ENCODE measurements at regions of chr1 and their contacts with region 1.

Region 1: DNA sequence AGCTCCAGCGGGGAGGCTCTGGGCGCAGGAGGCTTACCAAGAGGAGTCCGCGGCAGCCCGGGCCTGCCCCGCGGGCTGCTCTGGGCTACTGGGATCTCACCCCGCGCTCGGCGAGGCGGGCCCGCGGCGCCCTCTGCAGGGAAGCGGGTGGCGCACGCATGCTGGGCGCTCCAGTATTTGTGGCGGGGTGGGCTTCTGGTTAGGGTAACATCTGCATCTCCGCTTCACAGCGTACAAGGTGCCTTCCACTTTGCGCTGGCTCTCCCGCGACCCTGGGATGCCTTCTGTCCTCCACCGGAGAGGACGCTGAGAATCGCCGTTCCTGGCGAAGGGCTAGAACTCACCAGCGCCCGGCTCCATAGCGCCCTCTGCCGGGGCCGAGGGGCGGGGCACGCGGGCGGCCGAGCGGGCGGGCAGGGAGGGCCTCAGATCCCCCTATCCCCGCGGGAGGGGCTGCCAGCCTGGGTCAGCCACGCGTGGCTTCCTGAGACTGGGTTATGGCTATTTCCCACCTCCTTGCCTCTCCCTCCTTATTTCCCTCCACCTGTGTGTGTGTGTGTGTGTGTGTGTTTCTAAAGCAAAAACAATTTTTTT is 46.6 kb upstream of the CTBS start:
- DNase-seq: no peak
- H3K4me3 ChIP-seq: peak overlapping the region; percentile 66
- H3K27ac ChIP-seq: peak overlapping the region; percentile 77
- H3K27me3 ChIP-seq: no peaks in the 10 kb centered on the region
- CTCF ChIP-seq: peak; percentile 69

Region 2: GRCh38 chr1:84442256-84442655 is 178.6 kb before region 1 on chr1:
- CTCF ChIA-PET with region 1: interaction called, 11 read pairs
- POLR2A ChIA-PET with region 1: no interaction called
- DNase-seq: peak; percentile 78
- H3K4me3 ChIP-seq: no peak overlapping the region
- H3K27ac ChIP-seq: no peak overlapping the region
- H3K27me3 ChIP-seq: no peaks in the 10 kb centered on the region
- CTCF ChIP-seq: peak; percentile 57

Region 3: DNA sequence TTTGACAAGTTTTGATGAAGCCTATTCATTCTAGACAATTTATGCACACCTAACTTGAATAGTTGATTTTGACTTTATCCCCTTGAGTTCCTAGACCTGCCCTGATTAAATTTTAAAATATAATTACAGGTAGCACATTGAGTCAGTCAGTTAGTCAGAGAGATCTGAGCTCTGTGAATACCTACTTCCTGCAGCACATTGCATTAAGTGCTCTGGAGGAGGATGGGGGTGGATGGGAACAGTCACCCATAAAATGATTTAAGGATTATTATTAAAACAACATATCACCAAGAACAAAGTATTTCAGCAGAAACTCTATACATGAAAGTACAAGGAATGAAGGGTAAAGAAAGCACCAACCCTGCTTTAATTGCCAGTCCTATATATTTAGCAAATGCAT is 153.5 kb before region 1 on chr1:
- CTCF ChIA-PET with region 1: no interaction called
- POLR2A ChIA-PET with region 1: no interaction called
- DNase-seq: no peak
- H3K4me3 ChIP-seq: no peak overlapping the region
- H3K27ac ChIP-seq: no peak overlapping the region
- H3K27me3 ChIP-seq: peaks cover 7% of the 10 kb centered on the region
- CTCF ChIP-seq: no peak

Region 4: DNA sequence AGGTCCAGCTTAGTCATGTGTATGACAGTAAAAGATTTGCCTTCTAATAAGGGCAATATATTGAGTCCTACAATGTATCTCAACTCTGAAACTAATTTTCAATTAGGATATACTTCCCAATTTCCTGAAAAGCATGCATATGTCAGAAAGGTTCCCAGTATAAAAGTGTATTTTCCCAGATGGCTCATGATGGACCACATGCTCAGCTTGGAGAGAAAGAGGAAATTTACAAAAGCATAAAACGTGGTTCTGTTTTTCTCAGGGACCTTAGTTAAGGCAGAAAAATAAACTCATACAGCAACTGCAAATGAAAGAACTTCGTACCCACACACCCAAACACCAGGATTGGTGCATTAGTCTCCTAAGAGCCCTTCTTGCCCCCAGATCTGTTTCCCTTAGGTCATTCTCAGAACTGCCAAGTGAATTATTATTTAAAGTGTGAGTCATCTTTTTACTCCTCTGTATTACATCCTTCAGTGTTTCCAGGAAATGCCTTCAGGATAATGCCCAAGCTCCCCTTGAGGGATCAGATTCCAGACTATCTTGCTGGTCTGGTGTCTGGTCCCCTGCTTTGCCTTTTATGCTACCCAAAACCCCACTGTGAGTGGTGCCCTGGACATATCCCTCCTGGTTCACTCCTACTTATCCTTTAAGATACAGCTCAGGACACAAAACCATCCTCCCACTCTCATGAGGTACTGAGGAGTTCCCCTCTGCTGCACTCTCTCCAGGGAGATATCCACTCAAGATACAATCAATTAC is 12.0 kb after region 1 on chr1:
- CTCF ChIA-PET with region 1: interaction called, 16 read pairs
- POLR2A ChIA-PET with region 1: no interaction called
- DNase-seq: peak; percentile 18
- H3K4me3 ChIP-seq: no peak overlapping the region
- H3K27ac ChIP-seq: no peak overlapping the region
- H3K27me3 ChIP-seq: no peaks in the 10 kb centered on the region
- CTCF ChIP-seq: no peak